ENCODE measurements at regions of chr2 and their contacts with region 1.

Region 1: GRCh38 chr2:192500550-192501213 is 305.9 kb upstream of the TMEFF2 start:
- DNase-seq: no peak
- H3K4me3 ChIP-seq: no peak overlapping the region
- H3K27ac ChIP-seq: no peak overlapping the region
- H3K4me1 ChIP-seq: no peaks in the 10 kb centered on the region
- H3K27me3 ChIP-seq: no peaks in the 10 kb centered on the region
- CTCF ChIP-seq: no peak
- EP300 ChIP-seq: no peak
- POLR2A ChIP-seq: no peak

Region 2: GRCh38 chr2:193868833-193869232 is 1368.2 kb after region 1 on chr2:
- intact Hi-C with region 1: loop called in 1 of 4 experiments (anchors 10 kb)
- DNase-seq: no peak
- H3K4me3 ChIP-seq: no peak overlapping the region
- H3K27ac ChIP-seq: no peak overlapping the region
- H3K4me1 ChIP-seq: no peaks in the 10 kb centered on the region
- H3K27me3 ChIP-seq: no peaks in the 10 kb centered on the region
- CTCF ChIP-seq: no peak
- EP300 ChIP-seq: no peak
- POLR2A ChIP-seq: no peak